Activated CD8-positive, alpha-beta T cell treated with anti-CD3 and anti-CD28 coated beads for 36 hours (primary cell): ENCODE measurements at regions of chr17 and their contacts with region 1.

Region 1: GRCh38 chr17:64357191-64357981 is 33.3 kb downstream of the PECAM1 start:
- DNase-seq: no peak
- ATAC-seq: no peak
- H3K4me3 Mint-ChIP-seq: no peak overlapping the region
- H3K27ac Mint-ChIP-seq: peak overlapping the region; percentile 35
- H3K4me1 Mint-ChIP-seq: peaks cover 35% of the 10 kb centered on the region
- H3K27me3 Mint-ChIP-seq: no peaks in the 10 kb centered on the region
- CTCF ChIP-seq: no peak

Region 2: DNA sequence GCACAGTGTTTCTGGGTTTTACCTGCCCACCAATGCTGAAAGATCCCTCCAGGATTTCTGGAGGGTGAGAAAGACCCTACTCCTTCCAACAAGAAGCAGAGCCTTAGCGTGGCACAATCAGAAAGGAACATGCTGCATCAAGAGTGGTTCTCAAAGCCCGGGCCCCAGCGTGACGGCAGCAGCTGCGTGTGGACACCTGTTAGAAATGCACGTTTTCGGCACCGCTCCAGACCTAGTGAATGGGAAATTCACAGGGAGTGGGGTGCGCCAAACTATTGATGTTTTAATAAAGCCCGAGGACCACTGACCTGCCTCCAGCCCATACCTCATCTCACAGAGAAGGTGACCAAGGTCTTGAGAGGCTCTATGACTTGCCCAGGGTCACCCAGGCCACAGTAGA is 22.5 kb before region 1 on chr17:
- CTCF ChIA-PET with region 1: no interaction called
- POLR2A ChIA-PET with region 1: no interaction called
- intact Hi-C with region 1: no loop called
- DNase-seq: no peak
- ATAC-seq: no peak
- H3K4me3 Mint-ChIP-seq: no peak overlapping the region
- H3K27ac Mint-ChIP-seq: no peak overlapping the region
- H3K4me1 Mint-ChIP-seq: no peaks in the 10 kb centered on the region
- H3K27me3 Mint-ChIP-seq: no peaks in the 10 kb centered on the region
- CTCF ChIP-seq: no peak

Region 3: DNA sequence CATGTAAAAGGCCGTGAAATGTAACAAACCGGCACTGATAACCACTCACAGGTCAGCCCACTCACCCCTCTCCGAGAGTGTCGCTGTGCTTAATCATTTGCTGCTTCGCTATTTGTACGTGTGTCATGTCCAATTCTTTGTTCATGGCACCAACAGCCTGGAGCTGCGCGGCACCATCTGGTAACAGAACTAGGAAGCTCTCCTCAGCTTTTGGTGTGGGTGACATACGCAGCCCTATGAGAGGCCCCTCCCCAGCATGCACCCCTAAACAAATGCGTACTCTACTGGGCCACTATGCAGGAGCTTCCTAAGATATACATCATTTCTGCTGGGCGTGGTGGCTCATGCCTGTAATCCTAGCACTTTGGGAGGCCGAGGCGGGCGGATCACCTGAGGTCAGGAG is 35.6 kb after region 1 on chr17:
- CTCF ChIA-PET with region 1: interaction called, 3 read pairs
- POLR2A ChIA-PET with region 1: interaction called, 4 read pairs
- intact Hi-C with region 1: loop called (anchors 5 kb)
- DNase-seq: peak; percentile 87
- ATAC-seq: peak; percentile 81
- H3K4me3 Mint-ChIP-seq: peak overlapping the region; percentile 77
- H3K27ac Mint-ChIP-seq: peak overlapping the region; percentile 96
- H3K4me1 Mint-ChIP-seq: peaks cover 63% of the 10 kb centered on the region
- H3K27me3 Mint-ChIP-seq: no peaks in the 10 kb centered on the region
- CTCF ChIP-seq: no peak